Left cardiac atrium (tissue), 4 donors: ENCODE measurements at regions of chr1 and their contacts with region 1.

Region 1: GRCh38 chr1:168178638-168179437 is at the start of gene TIPRL:
- DNase-seq: peak; percentile 97
- ATAC-seq: peak; percentile 97 to 98
- total RNA-seq, gene TIPRL: 22.8 to 28.8 TPM

Region 2: GRCh38 chr1:168082008-168082876 is 96.6 kb before region 1 on chr1:
- intact Hi-C with region 1: no loop called
- DNase-seq: peak; percentile 73
- ATAC-seq: peak; percentile 51 to 69

Region 3: GRCh38 chr1:168227620-168228019 is 48.8 kb after region 1 on chr1:
- intact Hi-C with region 1: loop called in 1 of 2 experiments (anchors 2 kb)
- DNase-seq: no peak
- ATAC-seq: no peak

Region 4: GRCh38 chr1:168312718-168313604 is 134.1 kb after region 1 on chr1:
- intact Hi-C with region 1: no loop called
- DNase-seq: no peak
- ATAC-seq: no peak